B cell (primary cell): ENCODE measurements at regions of chr3 and their contacts with region 1.

Region 1: DNA sequence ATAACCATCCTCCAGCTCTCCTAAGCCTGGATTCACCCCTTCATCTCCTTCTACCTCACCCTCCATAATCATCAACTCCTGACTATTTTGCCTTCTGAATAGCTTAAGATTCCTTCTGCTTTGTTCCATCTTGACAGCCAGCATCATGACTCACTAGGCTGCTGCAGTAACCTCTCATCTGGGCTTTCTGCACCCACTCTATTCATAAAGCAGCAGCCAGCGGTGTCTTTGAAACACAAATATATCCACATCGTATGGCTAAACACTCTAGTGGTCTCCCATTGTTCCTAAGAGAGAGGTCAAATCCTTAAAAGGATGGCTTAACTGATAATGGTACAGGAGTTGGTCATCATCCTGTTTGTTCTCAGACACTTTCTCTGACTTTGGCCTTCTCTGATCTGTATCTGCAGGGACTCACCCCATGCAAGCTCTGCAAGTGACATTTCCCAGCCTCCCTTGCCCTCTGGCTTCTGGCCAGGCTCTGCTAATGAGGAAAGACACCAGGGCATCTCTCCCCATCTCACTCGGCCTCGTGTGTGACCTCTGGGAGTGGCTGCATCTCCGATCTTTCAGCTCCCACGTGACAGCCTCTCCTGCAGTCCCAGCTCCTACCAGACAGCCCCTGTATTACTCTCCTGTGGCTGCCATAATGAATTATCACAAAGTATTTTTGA is 6.2 kb downstream of the GRK7 start:
- DNase-seq: no peak
- ATAC-seq: no peak
- H3K4me3 ChIP-seq: no peak overlapping the region
- H3K4me3 Mint-ChIP-seq: no peak overlapping the region
- H3K27ac ChIP-seq: no peak overlapping the region
- H3K27ac Mint-ChIP-seq: no peak overlapping the region
- H3K4me1 ChIP-seq: no peaks in the 10 kb centered on the region
- H3K4me1 Mint-ChIP-seq: no peaks in the 10 kb centered on the region
- H3K27me3 ChIP-seq: no peaks in the 10 kb centered on the region
- H3K27me3 Mint-ChIP-seq: peaks cover 5% of the 10 kb centered on the region
- CTCF ChIP-seq: no peak

Region 2: DNA sequence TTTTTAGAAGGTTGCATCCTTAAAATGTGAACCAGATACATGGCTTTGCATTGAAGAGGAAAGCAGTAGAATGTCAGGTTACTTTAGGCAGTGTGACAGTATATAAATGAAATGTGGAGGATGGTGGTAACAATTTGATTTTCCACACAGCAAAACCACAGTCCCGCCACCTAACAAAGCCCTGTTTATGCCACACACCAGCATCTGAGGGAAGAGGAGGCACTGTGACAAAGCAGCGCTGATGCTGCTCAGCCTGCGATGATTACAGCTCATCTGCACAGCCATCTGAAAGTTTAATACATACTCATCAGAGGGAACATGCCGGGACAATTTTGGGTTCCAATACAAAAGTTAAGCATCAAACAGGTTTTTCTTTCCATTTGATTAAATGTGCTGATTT is 22.4 kb before region 1 on chr3:
- CTCF ChIA-PET with region 1: no interaction called
- POLR2A ChIA-PET with region 1: no interaction called
- intact Hi-C with region 1: loop called (anchors 2 kb)
- DNase-seq: no peak
- ATAC-seq: no peak
- H3K4me3 ChIP-seq: no peak overlapping the region
- H3K4me3 Mint-ChIP-seq: no peak overlapping the region
- H3K27ac ChIP-seq: no peak overlapping the region
- H3K27ac Mint-ChIP-seq: no peak overlapping the region
- H3K4me1 ChIP-seq: no peaks in the 10 kb centered on the region
- H3K4me1 Mint-ChIP-seq: peaks cover 16% of the 10 kb centered on the region
- H3K27me3 ChIP-seq: no peaks in the 10 kb centered on the region
- H3K27me3 Mint-ChIP-seq: no peaks in the 10 kb centered on the region
- CTCF ChIP-seq: no peak

Region 3: GRCh38 chr3:142613491-142613890 is 844.1 kb after region 1 on chr3:
- CTCF ChIA-PET with region 1: no interaction called
- POLR2A ChIA-PET with region 1: no interaction called
- intact Hi-C with region 1: no loop called
- DNase-seq: no peak
- ATAC-seq: no peak
- H3K4me3 ChIP-seq: no peak overlapping the region
- H3K4me3 Mint-ChIP-seq: no peak overlapping the region
- H3K27ac ChIP-seq: no peak overlapping the region
- H3K27ac Mint-ChIP-seq: no peak overlapping the region
- H3K4me1 ChIP-seq: no peaks in the 10 kb centered on the region
- H3K4me1 Mint-ChIP-seq: no peaks in the 10 kb centered on the region
- H3K27me3 ChIP-seq: no peaks in the 10 kb centered on the region
- H3K27me3 Mint-ChIP-seq: no peaks in the 10 kb centered on the region
- CTCF ChIP-seq: no peak